Activated CD8-positive, alpha-beta memory T cell treated with anti-CD3 and anti-CD28 coated beads, Interleukin-2, amount 10 ng/mL, durations not matched to agents 7 days and 5 days (primary cell): ENCODE measurements at regions of chr19 and their contacts with region 1.

Region 1: GRCh38 chr19:18117692-18118378 is 20.3 kb downstream of the MAST3 start:
- DNase-seq: peak; percentile 96
- ATAC-seq: peak; percentile 74
- H3K4me3 Mint-ChIP-seq: peak overlapping the region; percentile 80
- H3K27ac Mint-ChIP-seq: peak overlapping the region; percentile 90
- H3K4me1 Mint-ChIP-seq: peaks cover 42% of the 10 kb centered on the region
- H3K27me3 Mint-ChIP-seq: no peaks in the 10 kb centered on the region

Region 2: GRCh38 chr19:17947815-17948513 is 169.9 kb before region 1 on chr19:
- CTCF ChIA-PET with region 1: no interaction called
- DNase-seq: peak; percentile 96
- ATAC-seq: peak; percentile 78
- H3K4me3 Mint-ChIP-seq: peak overlapping the region; percentile 77
- H3K27ac Mint-ChIP-seq: no peak overlapping the region
- H3K4me1 Mint-ChIP-seq: peaks cover 36% of the 10 kb centered on the region
- H3K27me3 Mint-ChIP-seq: peaks cover 40% of the 10 kb centered on the region

Region 3: GRCh38 chr19:18021121-18021755 is 96.6 kb before region 1 on chr19:
- CTCF ChIA-PET with region 1: no interaction called
- DNase-seq: no peak
- ATAC-seq: peak; percentile 7
- H3K4me3 Mint-ChIP-seq: peak overlapping the region; percentile 59
- H3K27ac Mint-ChIP-seq: peak overlapping the region; percentile 88
- H3K4me1 Mint-ChIP-seq: peaks cover 45% of the 10 kb centered on the region
- H3K27me3 Mint-ChIP-seq: no peaks in the 10 kb centered on the region

Region 4: DNA sequence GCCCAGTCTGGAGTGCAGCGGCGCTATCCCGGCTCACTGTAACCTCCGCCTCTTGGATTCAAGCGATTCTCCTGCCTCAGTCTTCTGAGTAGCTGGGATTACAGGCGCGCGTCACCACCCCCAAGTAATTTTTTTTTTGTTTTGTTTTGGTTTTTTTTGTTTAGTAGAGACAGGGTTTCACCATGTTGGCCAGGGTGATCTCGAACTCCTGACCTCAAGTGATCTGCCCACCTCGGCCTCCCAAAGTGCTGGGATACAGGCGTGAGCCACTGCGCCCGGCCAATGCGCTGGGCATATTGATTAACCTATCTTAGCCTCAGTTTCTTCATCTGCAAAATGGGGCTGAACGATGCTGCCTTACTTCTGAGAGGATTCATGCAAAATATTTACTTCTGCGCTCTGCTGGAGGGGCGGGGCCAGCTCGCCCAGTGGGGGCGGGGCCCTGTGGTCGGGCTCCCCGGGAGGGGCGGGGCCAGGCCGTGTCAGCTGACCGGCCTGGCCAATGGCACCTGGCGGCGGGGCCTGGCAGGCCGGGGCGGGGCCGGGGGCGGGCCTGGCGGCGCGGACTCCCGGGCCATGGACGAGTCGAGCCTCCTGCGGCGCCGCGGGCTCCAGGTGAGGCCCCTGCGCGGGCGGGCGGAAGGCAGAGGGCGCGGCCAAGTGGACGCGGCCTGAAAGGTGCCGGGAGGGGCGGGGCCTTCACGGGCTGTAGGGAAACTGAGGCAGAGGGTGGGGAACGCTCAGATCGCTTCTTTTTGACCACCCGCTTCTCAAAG is 20.4 kb before region 1 on chr19 and contains the start of gene MAST3:
- CTCF ChIA-PET with region 1: interaction called, 67 read pairs
- DNase-seq: peak; percentile 95
- ATAC-seq: peak; percentile 98
- H3K4me3 Mint-ChIP-seq: peak within 1 kb of the TSS; percentile 78
- H3K27ac Mint-ChIP-seq: no peak within 1 kb of the TSS
- H3K4me1 Mint-ChIP-seq: peaks cover 37% of the 10 kb centered on the region
- H3K27me3 Mint-ChIP-seq: no peaks in the 10 kb centered on the region
- total RNA-seq, gene MAST3: 25.7 to 34.1 TPM

Region 5: DNA sequence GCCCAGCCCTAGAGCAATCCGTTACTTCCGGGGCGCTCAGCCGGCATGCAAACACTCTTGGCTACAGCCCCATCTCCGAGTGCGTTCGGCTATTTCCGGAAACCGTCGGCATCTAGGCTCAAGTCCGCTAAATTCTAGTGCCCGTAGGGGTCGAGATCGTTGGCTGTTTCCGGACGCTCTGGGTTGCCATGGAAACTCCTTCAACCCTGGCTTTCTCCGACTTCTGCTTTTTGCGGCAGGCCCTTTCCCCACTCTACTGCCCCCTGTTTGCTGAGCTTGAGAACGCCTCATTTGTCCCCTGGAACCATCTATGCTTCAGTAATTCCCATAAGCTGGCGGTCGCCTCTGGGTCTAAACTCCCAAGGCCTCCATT is 34.6 kb after region 1 on chr19:
- CTCF ChIA-PET with region 1: interaction called, 47 read pairs
- DNase-seq: peak; percentile 100
- ATAC-seq: peak; percentile 80
- H3K4me3 Mint-ChIP-seq: peak overlapping the region; percentile 84
- H3K27ac Mint-ChIP-seq: peak overlapping the region; percentile 93
- H3K4me1 Mint-ChIP-seq: peaks cover 35% of the 10 kb centered on the region
- H3K27me3 Mint-ChIP-seq: no peaks in the 10 kb centered on the region

Region 6: DNA sequence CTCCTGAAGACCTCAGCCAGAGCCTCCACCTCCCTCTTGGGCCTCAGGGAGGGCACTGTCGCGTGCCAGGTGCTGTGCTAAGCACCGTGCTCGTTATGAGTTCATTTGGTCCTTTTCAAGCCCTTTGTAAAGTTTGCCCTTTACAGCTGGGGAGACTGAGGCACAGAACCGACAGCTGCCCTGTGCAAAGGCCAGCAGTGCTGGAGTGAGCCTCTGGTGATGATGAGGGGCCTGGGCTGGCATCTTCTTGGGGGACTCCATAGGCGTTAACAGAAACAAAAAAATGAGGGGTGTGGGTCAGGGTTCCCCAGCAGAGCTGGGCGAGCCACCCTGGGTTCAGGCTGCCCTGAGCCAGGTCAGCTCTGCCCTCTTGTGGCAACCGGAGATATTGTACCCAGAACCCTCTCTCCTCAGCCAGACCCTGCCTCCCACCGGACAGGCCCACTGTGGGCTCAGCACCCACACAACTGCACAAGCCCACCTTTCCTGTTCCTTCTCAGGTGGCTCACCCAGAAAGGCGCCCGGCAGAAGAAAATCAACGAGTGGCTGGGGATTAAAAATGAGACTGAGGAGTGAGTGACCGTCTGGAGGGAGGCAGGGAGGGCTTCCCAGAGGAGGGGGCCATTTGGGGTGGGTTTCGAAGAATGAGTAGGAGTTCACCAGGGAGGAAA is 50.3 kb after region 1 on chr19:
- CTCF ChIA-PET with region 1: interaction called, 84 read pairs
- DNase-seq: peak; percentile 80
- ATAC-seq: peak; percentile 95
- H3K4me3 Mint-ChIP-seq: no peak overlapping the region
- H3K27ac Mint-ChIP-seq: no peak overlapping the region
- H3K4me1 Mint-ChIP-seq: peaks cover 7% of the 10 kb centered on the region
- H3K27me3 Mint-ChIP-seq: no peaks in the 10 kb centered on the region